Psoas muscle (tissue), 8 donors: ENCODE measurements at regions of chr3 and their contacts with region 1.

Region 1: GRCh38 chr3:71487418-71487817 is 96.1 kb downstream of the FOXP1 start:
- DNase-seq: no peak
- ATAC-seq: no peak
- H3K4me3 ChIP-seq: no peak overlapping the region
- H3K27ac ChIP-seq: no peak overlapping the region
- H3K4me1 ChIP-seq: no peaks in the 10 kb centered on the region
- H3K27me3 ChIP-seq: no peaks in the 10 kb centered on the region
- CTCF ChIP-seq: no peak

Region 2: DNA sequence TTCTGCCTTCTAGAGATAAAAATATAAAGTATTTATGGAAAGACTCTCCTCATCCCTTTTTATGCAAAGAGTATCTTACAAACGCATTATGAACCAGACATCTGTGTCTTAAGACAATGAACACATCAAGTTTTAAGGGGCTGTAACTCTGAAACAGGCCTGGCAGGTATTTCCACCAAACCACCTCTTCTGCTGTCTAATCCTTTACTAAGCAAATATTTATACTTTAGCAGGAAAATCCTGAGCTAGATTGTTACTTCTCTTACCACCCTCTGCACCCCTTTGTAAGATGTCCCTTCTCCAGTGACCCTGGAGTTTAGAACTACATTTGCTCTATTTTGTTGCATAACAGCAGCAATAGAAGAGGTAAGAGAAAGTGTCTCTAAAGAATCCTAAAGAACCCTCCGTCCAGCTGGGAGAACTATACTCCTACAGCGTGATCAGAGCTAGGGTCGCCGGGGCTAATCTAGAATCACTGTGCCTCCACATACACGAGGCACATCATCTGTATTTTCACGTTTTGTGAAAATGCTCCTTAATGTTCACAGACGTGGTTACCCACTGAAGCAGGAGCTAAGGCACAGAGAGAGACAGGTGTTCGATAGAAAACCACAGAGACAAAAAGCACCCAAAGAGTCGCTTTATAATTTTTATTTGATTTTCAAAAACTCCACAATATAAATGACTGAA is 33.5 kb before region 1 on chr3:
- intact Hi-C with region 1: loop called in 1 of 2 experiments (anchors 5 kb)
- DNase-seq: no peak
- ATAC-seq: no peak
- H3K4me3 ChIP-seq: no peak overlapping the region
- H3K27ac ChIP-seq: no peak overlapping the region
- H3K4me1 ChIP-seq: peaks cover 22% of the 10 kb centered on the region
- H3K27me3 ChIP-seq: no peaks in the 10 kb centered on the region
- CTCF ChIP-seq: no peak